ENCODE measurements at regions of chr7 and their contacts with region 1.

Region 1: GRCh38 chr7:66681491-66682349 is 53.0 kb downstream of the KCTD7 start:
- DNase-seq: peak; percentile 86

Region 2: DNA sequence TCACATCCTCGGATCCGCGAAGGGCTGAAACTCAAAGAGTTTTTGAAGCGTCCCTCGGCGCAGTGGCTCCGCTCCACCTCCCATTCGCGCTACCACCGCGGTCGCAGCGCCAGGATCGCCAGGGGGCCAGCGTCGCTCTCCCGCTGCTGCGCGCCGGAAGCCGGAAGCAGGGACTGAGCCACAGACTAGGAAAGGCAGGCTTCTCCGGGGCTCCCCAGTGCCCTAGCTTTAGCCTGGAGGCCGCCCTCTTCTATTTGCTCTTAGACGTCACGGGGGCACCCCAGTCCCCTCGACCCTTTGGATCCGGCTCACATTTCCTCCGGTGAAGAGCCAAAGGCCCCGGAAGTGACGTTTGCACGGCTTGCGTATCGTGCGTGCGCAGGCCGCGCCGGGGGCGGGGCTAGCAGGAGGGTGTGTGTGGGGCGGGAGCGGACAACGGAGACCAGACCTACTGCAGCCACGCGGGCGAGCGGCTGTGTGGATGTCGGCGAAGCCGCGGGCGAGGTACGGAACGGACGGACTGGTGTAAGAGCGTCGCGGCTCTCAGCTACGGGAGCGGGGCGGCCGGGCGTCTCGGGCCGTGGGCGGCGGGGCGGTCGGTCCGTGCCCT is 27.5 kb before region 1 on chr7:
- CTCF ChIA-PET with region 1: no interaction called
- POLR2A ChIA-PET with region 1: interaction called, 10 read pairs
- DNase-seq: peak; percentile 96

Region 3: GRCh38 chr7:67843001-67843565 is 1161.4 kb after region 1 on chr7:
- CTCF ChIA-PET with region 1: no interaction called
- POLR2A ChIA-PET with region 1: no interaction called
- DNase-seq: no peak

Measured in HEK293T (cell line).